B cell (primary cell): ENCODE measurements at regions of chr2 and their contacts with region 1.

Region 1: GRCh38 chr2:233353769-233354499 is at the start of gene DGKD:
- DNase-seq: peak; percentile 90
- ATAC-seq: peak; percentile 77
- H3K4me3 ChIP-seq: peak within 1 kb of the TSS; percentile 82 to 89 (median 83)
- H3K4me3 Mint-ChIP-seq: peak within 1 kb of the TSS; percentile 96
- H3K27ac ChIP-seq: peak within 1 kb of the TSS; percentile 89 to 97
- H3K27ac Mint-ChIP-seq: peak within 1 kb of the TSS; percentile 96
- H3K4me1 ChIP-seq: peaks cover 79 to 85% of the 10 kb centered on the region in 2 donors
- H3K4me1 Mint-ChIP-seq: peaks cover 86% of the 10 kb centered on the region
- H3K27me3 ChIP-seq: no peaks in the 10 kb centered on the region
- H3K27me3 Mint-ChIP-seq: no peaks in the 10 kb centered on the region
- CTCF ChIP-seq: peak; percentile 14
- total RNA-seq, gene DGKD: 396 and 397 TPM in 2 replicates

Region 2: DNA sequence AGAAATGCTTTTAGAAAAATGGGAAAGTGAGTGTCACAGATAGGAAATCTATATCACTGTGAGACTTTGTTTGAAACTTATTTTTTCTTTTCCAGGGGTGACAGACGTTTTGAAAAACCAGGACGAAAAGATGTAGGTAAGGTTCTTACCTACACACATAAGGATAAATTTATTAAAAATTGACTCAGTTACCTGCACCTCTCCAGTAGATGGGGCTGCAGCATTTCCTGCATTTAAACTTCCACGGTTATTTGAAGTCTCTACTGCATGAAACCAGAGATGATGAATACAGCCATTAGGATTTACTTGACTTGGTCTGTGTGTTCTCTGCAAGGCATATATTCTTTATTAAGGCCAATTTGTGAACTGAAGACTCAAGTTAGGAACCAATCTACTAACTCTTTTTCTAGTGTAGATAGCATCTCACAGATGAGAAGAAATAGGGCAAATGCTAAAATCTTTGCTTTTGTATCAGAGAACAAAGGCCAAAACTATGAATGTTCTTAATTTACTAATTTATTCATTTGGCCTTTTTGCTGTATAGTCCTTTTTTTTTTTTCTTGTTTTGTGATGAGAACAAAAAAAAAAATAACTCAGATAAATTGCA is 592.5 kb before region 1 on chr2:
- CTCF ChIA-PET with region 1: no interaction called
- POLR2A ChIA-PET with region 1: no interaction called
- intact Hi-C with region 1: no loop called
- DNase-seq: peak; percentile 56
- ATAC-seq: no peak
- H3K4me3 ChIP-seq: no peak overlapping the region
- H3K4me3 Mint-ChIP-seq: no peak overlapping the region
- H3K27ac ChIP-seq: no peak overlapping the region
- H3K27ac Mint-ChIP-seq: no peak overlapping the region
- H3K4me1 ChIP-seq: no peaks in the 10 kb centered on the region
- H3K4me1 Mint-ChIP-seq: no peaks in the 10 kb centered on the region
- H3K27me3 ChIP-seq: no peaks in the 10 kb centered on the region
- H3K27me3 Mint-ChIP-seq: no peaks in the 10 kb centered on the region
- CTCF ChIP-seq: peak; percentile 77

Region 3: DNA sequence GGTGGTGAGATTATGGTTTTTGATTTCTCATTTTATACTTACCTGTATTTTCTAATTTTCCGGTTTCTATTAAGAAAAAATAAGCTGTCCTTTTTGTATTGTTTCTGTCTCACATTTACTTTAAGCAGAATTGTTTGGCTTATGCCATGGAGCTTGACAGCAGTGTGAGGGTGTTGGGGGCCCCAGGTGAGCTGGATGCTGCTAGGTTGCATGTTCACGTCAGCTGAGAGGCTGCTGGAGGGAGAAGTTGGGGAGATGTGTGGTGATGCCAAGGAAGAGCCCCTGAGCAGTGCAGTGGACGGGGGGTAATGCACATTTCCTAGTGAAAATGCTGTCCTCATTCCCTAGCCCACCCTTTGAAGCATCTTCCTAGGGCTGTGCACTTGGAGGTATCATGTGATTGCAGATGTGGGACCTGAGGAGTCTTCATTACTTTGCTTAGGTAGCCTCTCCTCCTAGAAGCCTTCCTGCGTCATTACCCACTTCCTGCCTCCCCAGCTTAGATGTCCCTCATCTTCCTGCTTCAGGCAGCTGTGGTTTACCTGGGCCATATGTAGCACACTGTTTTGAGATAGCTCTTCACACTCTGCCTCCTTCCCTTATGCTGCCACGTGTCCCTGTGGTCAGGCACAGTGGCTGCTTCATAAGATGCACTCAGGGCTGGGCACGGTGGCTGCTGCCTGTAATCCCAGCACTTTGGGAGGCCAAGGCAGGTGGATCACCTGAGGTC is 86.3 kb before region 1 on chr2:
- CTCF ChIA-PET with region 1: interaction called, 13 read pairs
- POLR2A ChIA-PET with region 1: interaction called, 10 read pairs
- intact Hi-C with region 1: loop called (anchors 2 kb)
- DNase-seq: peak; percentile 78
- ATAC-seq: peak; percentile 94
- H3K4me3 ChIP-seq: no peak overlapping the region
- H3K4me3 Mint-ChIP-seq: peak overlapping the region; percentile 48
- H3K27ac ChIP-seq: peak overlapping the region; percentile 57 to 73
- H3K27ac Mint-ChIP-seq: peak overlapping the region; percentile 75
- H3K4me1 ChIP-seq: peaks cover 30 to 38% of the 10 kb centered on the region in 2 donors
- H3K4me1 Mint-ChIP-seq: peaks cover 49% of the 10 kb centered on the region
- H3K27me3 ChIP-seq: no peaks in the 10 kb centered on the region
- H3K27me3 Mint-ChIP-seq: no peaks in the 10 kb centered on the region
- CTCF ChIP-seq: no peak

Region 4: GRCh38 chr2:233331536-233331935 is 22.4 kb before region 1 on chr2:
- CTCF ChIA-PET with region 1: interaction called, 17 read pairs
- POLR2A ChIA-PET with region 1: interaction called, 30 read pairs
- intact Hi-C with region 1: loop called (anchors 1 kb)
- DNase-seq: peak; percentile 96
- ATAC-seq: peak; percentile 91
- H3K4me3 ChIP-seq: peak overlapping the region in 2 of 5 experiments; percentile 19 to 32
- H3K4me3 Mint-ChIP-seq: peak overlapping the region; percentile 73
- H3K27ac ChIP-seq: peak overlapping the region; percentile 92 to 97
- H3K27ac Mint-ChIP-seq: peak overlapping the region; percentile 94
- H3K4me1 ChIP-seq: peaks cover 66 to 78% of the 10 kb centered on the region in 2 donors
- H3K4me1 Mint-ChIP-seq: peaks cover 79% of the 10 kb centered on the region
- H3K27me3 ChIP-seq: no peaks in the 10 kb centered on the region
- H3K27me3 Mint-ChIP-seq: no peaks in the 10 kb centered on the region
- CTCF ChIP-seq: no peak

Region 5: DNA sequence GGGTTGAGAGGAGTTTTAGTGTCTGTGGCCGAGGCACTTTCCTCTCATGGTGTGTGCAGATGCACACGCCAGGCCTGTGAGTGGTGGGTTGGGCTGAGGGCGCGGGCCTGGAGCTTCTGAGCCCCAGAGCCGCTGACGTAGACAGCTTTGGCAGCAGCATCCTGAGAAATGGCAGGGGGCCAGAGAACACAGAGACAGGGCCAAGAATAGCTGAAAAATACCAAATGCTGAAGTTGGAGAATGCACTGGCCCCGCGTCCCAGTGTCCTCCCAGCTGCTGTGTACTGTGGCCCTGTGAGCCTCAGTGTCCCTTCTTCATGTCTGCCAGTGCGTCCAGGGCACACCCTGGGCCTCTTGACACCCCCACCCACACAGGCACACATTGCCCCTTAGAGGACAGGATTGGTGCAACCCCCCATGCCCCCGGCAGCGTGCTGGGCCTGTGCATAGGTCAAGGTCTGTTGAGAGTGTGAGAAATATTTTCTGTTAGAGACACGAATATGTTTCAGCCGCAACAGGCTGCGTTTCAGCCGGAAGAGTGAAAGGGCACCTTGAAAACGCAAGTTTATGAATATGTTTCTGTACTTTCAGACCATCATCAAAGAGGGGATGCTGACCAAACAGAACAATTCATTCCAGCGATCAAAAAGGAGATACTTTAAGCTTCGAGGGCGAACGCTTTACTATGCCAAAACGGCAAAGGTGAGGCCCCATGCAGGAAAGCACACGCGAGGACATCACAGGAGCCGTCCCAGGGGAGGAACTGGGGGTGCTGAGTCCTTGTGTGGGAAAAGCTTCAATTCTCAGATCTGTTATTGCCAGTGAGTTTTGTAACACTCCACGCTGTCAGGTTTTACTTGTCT is 34.0 kb after region 1 on chr2:
- CTCF ChIA-PET with region 1: interaction called, 15 read pairs
- POLR2A ChIA-PET with region 1: interaction called, 7 read pairs
- intact Hi-C with region 1: loop called (anchors 2 kb)
- DNase-seq: no peak
- ATAC-seq: no peak
- H3K4me3 ChIP-seq: no peak overlapping the region
- H3K4me3 Mint-ChIP-seq: peak overlapping the region; percentile 37
- H3K27ac ChIP-seq: peak overlapping the region in 1 of 2 donors; percentile 85
- H3K27ac Mint-ChIP-seq: peak overlapping the region; percentile 76
- H3K4me1 ChIP-seq: peaks cover 52 to 54% of the 10 kb centered on the region in 2 donors
- H3K4me1 Mint-ChIP-seq: peaks cover 68% of the 10 kb centered on the region
- H3K27me3 ChIP-seq: no peaks in the 10 kb centered on the region
- H3K27me3 Mint-ChIP-seq: no peaks in the 10 kb centered on the region
- CTCF ChIP-seq: no peak

Region 6: DNA sequence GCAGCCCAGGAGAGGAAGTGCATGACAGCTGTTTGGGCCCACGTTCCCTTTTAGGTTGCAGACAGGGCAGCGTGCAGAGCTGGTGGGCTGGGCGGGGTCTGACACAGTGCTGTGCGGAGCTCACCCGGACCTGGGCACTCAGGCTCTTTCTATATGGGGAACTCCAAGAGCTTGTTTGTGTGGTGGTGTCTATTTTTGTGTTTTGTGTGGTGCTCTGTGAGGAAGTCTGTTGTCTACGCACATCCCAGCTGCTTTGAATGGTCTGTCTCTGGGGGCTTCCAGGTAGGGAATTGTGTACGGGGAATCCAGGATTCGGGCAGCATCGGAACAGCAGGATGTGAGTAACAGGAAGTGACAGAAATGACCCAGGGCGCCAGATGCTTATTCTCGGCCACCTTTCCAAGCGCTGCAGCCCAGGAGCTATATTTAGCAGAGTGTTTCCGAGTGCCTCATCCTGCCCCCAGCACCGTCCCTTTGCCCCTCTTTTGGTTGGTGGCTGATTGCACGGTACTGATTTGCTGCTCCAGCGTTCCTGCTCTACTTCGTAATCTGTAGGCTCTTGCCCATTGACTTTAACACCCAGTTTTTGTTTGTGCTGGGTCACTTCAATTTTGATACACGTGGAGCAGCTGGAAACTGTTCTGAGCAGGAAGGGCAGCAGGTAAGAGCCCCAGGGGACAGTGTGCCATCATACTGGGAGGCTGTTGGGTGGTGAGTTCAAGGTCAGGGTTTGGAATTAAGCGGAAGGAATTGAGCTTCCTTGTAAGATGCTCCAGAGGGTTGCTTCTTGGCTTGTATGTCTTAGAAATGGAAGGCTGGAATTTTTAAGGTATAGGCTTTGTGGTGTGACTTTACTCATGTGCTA is 65.1 kb after region 1 on chr2:
- CTCF ChIA-PET with region 1: interaction called, 8 read pairs
- POLR2A ChIA-PET with region 1: interaction called, 4 read pairs
- intact Hi-C with region 1: loop called (anchors 2 kb)
- DNase-seq: peak; percentile 89
- ATAC-seq: peak; percentile 75
- H3K4me3 ChIP-seq: peak overlapping the region; percentile 45 to 77 (median 67)
- H3K4me3 Mint-ChIP-seq: peak overlapping the region; percentile 91
- H3K27ac ChIP-seq: peak overlapping the region; percentile 91 to 92
- H3K27ac Mint-ChIP-seq: peak overlapping the region; percentile 97
- H3K4me1 ChIP-seq: peaks cover 94 to 97% of the 10 kb centered on the region in 2 donors
- H3K4me1 Mint-ChIP-seq: peaks cover 92% of the 10 kb centered on the region
- H3K27me3 ChIP-seq: no peaks in the 10 kb centered on the region
- H3K27me3 Mint-ChIP-seq: no peaks in the 10 kb centered on the region
- CTCF ChIP-seq: no peak

Region 7: GRCh38 chr2:233449921-233450863 is 96.3 kb after region 1 on chr2:
- CTCF ChIA-PET with region 1: no interaction called
- POLR2A ChIA-PET with region 1: no interaction called
- intact Hi-C with region 1: no loop called
- DNase-seq: no peak
- ATAC-seq: no peak
- H3K4me3 ChIP-seq: no peak overlapping the region
- H3K4me3 Mint-ChIP-seq: no peak overlapping the region
- H3K27ac ChIP-seq: no peak overlapping the region
- H3K27ac Mint-ChIP-seq: no peak overlapping the region
- H3K4me1 ChIP-seq: no peaks in the 10 kb centered on the region
- H3K4me1 Mint-ChIP-seq: no peaks in the 10 kb centered on the region
- H3K27me3 ChIP-seq: no peaks in the 10 kb centered on the region
- H3K27me3 Mint-ChIP-seq: no peaks in the 10 kb centered on the region
- CTCF ChIP-seq: no peak